ENCODE measurements at regions of chr14 and their contacts with region 1.

Region 1: DNA sequence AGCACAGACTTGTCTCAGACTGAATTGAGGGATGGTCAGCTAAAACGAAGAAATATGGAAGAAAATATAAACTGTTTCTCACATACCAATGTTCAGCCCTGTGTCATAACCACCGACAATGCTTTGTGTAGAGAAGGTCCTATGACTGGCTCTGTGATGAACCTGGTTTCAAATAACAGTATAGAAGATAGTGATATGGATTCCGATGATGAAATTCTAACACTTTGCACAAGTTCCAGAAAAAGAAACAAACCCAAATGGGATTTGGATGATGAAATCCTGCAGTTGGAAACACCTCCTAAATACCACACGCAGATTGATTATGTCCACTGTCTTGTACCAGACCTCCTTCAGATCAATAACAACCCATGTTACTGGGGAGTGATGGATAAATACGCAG is 7.9 kb upstream of the MAPK1IP1L start:
- DNase-seq: peak; percentile 65
- ATAC-seq: peak; percentile 75
- H3K4me3 ChIP-seq: no peak overlapping the region
- H3K27ac ChIP-seq: peak overlapping the region; percentile 61; the same call in 1 of the 2 replicates
- H3K4me1 ChIP-seq: peaks cover 6% of the 10 kb centered on the region
- H3K27me3 ChIP-seq: no peaks in the 10 kb centered on the region
- CTCF ChIP-seq: no peak
- POLR2A ChIP-seq: no peak
- RAD21 ChIP-seq: no peak

Region 2: DNA sequence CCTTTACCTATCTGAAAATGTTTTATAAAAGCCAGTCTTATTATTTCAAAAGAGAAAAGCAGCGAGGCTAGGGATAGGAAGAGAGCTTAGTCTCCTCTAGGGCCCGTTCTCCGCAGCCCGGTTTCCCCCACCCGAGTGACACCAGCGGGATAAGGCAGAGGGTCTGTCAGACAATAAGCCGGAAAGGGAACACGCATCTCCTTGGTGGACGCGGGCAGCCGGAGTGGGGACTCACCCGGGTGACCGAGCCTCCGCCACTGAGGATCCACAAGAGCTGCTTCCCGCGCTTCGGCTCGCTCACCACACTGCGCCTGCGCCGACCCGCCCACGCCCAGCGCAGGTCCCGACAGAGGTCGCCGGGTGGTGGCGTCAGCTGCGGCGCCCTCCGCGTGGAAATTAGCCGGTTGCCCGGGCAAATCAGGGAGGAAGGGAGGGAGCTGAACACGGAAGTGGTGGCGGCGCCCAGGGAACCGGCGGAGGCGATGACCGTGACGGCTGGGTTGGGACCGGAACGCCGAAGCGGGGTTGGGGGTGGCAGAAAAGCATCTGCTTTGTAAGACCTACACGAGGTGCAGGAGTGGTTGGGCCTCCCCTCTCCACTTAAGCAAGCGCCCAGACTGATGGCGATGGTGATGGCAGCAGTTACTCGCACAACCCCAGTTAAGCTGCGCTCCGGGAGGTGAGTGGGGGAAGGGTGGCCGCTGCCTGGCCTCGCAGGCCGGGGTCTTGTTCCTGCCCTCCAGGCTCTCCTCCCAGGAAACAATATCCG is 16.6 kb before region 1 on chr14 and contains the starts of genes SOCS4 and WDHD1:
- CTCF ChIA-PET with region 1: no interaction called
- POLR2A ChIA-PET with region 1: interaction called, 3 read pairs
- dilution Hi-C with region 1: no loop called
- in situ Hi-C with region 1: no loop called
- intact Hi-C with region 1: loop called (anchors 2 kb)
- DNase-seq: peak; percentile 88
- ATAC-seq: peak; percentile 96
- H3K4me3 ChIP-seq: peak within 1 kb of the TSS; percentile 83
- H3K27ac ChIP-seq: peak within 1 kb of the TSS; percentile 76
- H3K4me1 ChIP-seq: peaks cover 5% of the 10 kb centered on the region; the same call in 1 of the 2 replicates
- H3K27me3 ChIP-seq: no peaks in the 10 kb centered on the region
- CTCF ChIP-seq: peak; percentile 9; the same call in 1 of the 2 replicates
- POLR2A ChIP-seq: peak; percentile 85
- RAD21 ChIP-seq: no peak
- total RNA-seq, gene SOCS4: 12.7 and 21.7 TPM in 2 replicates
- total RNA-seq, gene WDHD1: 13.1 and 17.5 TPM in 2 replicates

Measured in IMR-90 (cell line).